PC-9 (cell line): ENCODE measurements at regions of chr19 and their contacts with region 1.

Region 1: DNA sequence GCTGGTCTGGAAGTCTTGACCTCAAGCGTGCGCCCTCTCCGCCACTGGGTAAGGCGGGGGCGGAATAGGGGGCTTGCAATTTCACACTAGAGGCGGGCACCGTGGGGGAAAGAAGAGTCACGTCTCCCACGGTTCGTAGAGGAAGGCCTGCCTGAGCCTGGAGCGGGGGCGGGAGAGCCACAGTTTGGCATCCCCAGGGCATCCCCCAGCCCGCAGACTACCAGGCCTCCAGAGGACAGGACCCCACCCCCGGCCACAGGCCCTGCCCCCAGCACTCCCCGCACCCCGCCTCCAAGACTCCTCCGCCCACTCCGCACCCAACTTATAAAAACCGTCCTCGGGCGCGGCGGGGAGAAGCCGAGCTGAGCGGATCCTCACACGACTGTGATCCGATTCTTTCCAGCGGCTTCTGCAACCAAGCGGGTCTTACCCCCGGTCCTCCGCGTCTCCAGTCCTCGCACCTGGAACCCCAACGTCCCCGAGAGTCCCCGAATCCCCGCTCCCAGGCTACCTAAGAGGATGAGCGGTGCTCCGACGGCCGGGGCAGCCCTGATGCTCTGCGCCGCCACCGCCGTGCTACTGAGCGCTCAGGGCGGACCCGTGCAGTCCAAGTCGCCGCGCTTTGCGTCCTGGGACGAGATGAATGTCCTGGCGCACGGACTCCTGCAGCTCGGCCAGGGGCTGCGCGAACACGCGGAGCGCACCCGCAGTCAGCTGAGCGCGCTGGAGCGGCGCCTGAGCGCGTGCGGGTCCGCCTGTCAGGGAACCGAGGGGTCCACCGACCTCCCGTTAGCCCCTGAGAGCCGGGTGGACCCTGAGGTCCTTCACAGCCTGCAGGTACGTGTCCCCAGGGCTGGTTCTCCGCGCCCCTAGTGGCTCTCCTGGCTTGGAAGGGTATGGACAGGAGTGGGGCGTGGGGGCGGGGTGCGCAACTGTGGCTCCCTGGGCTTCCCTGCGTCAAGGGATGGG is at the start of gene ANGPTL4:
- DNase-seq: peak in 1 of 2 experiments; percentile 33
- H3K4me3 ChIP-seq: no peak within 1 kb of the TSS
- H3K27ac ChIP-seq: peak within 1 kb of the TSS; percentile 75
- H3K4me1 ChIP-seq: peaks cover 57% of the 10 kb centered on the region
- H3K27me3 ChIP-seq: no peaks in the 10 kb centered on the region
- CTCF ChIP-seq: no peak
- total RNA-seq, gene ANGPTL4: 0.30 TPM in 1 of 2 replicates, not detected in the other

Region 2: DNA sequence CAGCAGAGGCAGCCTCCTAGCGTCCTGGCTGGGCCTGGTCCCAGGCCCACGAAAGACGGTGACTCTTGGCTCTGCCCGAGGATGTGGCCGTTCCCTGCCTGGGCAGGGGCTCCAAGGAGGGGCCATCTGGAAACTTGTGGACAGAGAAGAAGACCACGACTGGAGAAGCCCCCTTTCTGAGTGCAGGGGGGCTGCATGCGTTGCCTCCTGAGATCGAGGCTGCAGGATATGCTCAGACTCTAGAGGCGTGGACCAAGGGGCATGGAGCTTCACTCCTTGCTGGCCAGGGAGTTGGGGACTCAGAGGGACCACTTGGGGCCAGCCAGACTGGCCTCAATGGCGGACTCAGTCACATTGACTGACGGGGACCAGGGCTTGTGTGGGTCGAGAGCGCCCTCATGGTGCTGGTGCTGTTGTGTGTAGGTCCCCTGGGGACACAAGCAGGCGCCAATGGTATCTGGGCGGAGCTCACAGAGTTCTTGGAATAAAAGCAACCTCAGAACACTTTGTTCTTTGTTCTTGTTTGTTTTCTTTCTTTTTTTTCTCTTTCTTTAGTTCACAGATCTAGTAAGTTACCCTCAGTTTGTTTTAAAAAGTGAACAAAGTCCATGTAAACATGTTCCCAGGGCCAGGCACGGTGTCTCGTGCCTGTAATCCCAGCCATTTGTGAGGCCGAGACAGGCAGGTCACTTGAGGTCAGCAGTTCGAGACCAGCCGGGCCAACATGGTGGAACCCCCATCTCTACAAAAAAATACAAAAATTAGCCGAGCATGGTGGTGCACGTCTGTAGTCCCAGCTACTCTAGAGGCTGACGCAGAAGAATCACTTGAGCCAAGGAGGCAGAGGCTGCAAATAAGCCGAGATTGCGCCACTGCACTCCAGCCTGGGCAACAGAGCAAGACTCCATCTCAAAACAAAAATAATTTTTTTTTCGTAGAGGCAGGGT is 10.1 kb after region 1 on chr19:
- CTCF ChIA-PET with region 1: no interaction called
- POLR2A ChIA-PET with region 1: no interaction called
- intact Hi-C with region 1: no loop called
- DNase-seq: no peak
- H3K4me3 ChIP-seq: no peak overlapping the region
- H3K27ac ChIP-seq: no peak overlapping the region
- H3K4me1 ChIP-seq: no peaks in the 10 kb centered on the region; the same call in 1 of the 2 replicates
- H3K27me3 ChIP-seq: no peaks in the 10 kb centered on the region
- CTCF ChIP-seq: no peak

Region 3: GRCh38 chr19:8389891-8390616 is 26.0 kb after region 1 on chr19 and contains the start of gene RAB11B:
- CTCF ChIA-PET with region 1: interaction called, 4 read pairs
- POLR2A ChIA-PET with region 1: interaction called, 4 read pairs
- intact Hi-C with region 1: loop called (anchors 2 kb)
- DNase-seq: peak; percentile 99 to 100
- H3K4me3 ChIP-seq: peak within 1 kb of the TSS; percentile 82
- H3K27ac ChIP-seq: peak within 1 kb of the TSS; percentile 85
- H3K4me1 ChIP-seq: peaks cover 56% of the 10 kb centered on the region
- H3K27me3 ChIP-seq: no peaks in the 10 kb centered on the region
- CTCF ChIP-seq: no peak
- total RNA-seq, gene RAB11B: 119 and 126 TPM in 2 replicates

Region 4: DNA sequence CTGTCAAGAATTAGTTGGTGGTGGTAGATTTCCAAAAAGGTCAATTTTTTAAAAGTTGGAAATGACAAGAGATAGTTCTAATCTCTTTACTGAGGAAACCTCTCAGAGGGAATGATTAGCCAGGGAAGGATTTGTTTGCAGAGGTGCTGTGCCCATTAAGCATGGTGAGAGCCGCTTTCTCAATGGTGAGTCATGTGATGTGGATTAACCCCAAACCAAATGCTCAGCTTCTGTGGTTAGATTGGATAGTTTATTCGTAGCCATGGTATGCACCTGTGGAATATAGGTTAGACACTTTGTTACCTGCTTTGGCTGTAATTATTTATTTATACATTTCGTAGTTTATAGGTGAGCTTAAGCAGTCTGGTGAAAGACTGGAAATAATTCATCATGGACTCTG is 87.8 kb after region 1 on chr19:
- CTCF ChIA-PET with region 1: no interaction called
- POLR2A ChIA-PET with region 1: no interaction called
- intact Hi-C with region 1: loop called (anchors 10 kb)
- DNase-seq: peak; percentile 39 to 90
- H3K4me3 ChIP-seq: peak overlapping the region; percentile 3; the same call in 1 of the 2 replicates
- H3K27ac ChIP-seq: peak overlapping the region; percentile 10
- H3K4me1 ChIP-seq: peaks cover 46% of the 10 kb centered on the region
- H3K27me3 ChIP-seq: no peaks in the 10 kb centered on the region
- CTCF ChIP-seq: no peak